WTC11 (cell line): ENCODE measurements at regions of chr12 and their contacts with region 1.

Region 1: GRCh38 chr12:8949342-8950220 is at the start of gene M6PR:
- DNase-seq: peak; percentile 91
- ATAC-seq: peak; percentile 89
- H3K4me3 Mint-ChIP-seq: peak within 1 kb of the TSS; percentile 95
- H3K27ac Mint-ChIP-seq: peak within 1 kb of the TSS; percentile 93
- H3K4me1 Mint-ChIP-seq: peaks cover 20% of the 10 kb centered on the region
- H3K27me3 Mint-ChIP-seq: no peaks in the 10 kb centered on the region
- CTCF ChIP-seq: no peak
- total RNA-seq, gene M6PR: 106 to 139 TPM (median 112 TPM) in 3 replicates

Region 2: GRCh38 chr12:8914716-8915526 is 34.7 kb before region 1 on chr12:
- CTCF ChIA-PET with region 1: interaction called, 10 read pairs
- POLR2A ChIA-PET with region 1: interaction called, 16 read pairs
- DNase-seq: peak; percentile 73
- ATAC-seq: peak; percentile 60
- H3K4me3 Mint-ChIP-seq: no peak overlapping the region
- H3K27ac Mint-ChIP-seq: no peak overlapping the region
- H3K4me1 Mint-ChIP-seq: peaks cover 48% of the 10 kb centered on the region
- H3K27me3 Mint-ChIP-seq: no peaks in the 10 kb centered on the region
- CTCF ChIP-seq: no peak

Region 3: GRCh38 chr12:8996682-8997360 is 47.2 kb after region 1 on chr12:
- CTCF ChIA-PET with region 1: no interaction called
- POLR2A ChIA-PET with region 1: no interaction called
- DNase-seq: no peak
- ATAC-seq: no peak
- H3K4me3 Mint-ChIP-seq: no peak overlapping the region
- H3K27ac Mint-ChIP-seq: peak overlapping the region; percentile 62
- H3K4me1 Mint-ChIP-seq: peaks cover 9% of the 10 kb centered on the region
- H3K27me3 Mint-ChIP-seq: no peaks in the 10 kb centered on the region
- CTCF ChIP-seq: no peak

Region 4: GRCh38 chr12:9032202-9033178 is 82.9 kb after region 1 on chr12:
- CTCF ChIA-PET with region 1: interaction called, 36 read pairs
- POLR2A ChIA-PET with region 1: interaction called, 6 read pairs
- DNase-seq: no peak
- ATAC-seq: no peak
- H3K4me3 Mint-ChIP-seq: no peak overlapping the region
- H3K27ac Mint-ChIP-seq: no peak overlapping the region
- H3K4me1 Mint-ChIP-seq: peaks cover 7% of the 10 kb centered on the region
- H3K27me3 Mint-ChIP-seq: no peaks in the 10 kb centered on the region; the same call in 1 of the 2 replicates
- CTCF ChIP-seq: no peak

Region 5: DNA sequence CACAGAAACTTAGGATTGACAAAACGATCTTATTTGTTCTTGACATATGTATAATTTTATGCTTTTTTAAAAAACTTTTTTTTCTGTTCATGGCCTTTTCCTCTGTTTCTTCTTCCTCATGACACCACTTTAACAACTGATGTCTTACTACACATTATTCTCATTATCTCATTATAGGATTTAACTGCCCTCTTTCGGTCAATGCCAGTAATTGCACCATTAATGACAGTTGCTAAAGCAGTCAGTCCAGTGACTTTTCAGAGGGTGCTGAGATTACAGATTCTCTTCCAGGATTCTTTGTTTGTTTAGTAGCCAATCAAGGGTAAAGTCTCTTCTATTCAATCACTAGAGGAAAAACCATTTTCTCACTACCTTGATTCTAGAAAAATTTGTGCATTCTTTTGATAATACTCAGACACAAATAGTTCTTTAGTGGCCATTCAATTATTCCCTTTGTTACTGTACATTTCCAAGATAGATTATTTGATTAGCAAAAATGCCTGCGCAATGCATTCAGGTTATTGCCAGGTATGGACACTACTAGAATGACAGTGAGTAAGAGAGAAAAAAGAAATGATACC is 89.9 kb after region 1 on chr12:
- CTCF ChIA-PET with region 1: interaction called, 36 read pairs
- POLR2A ChIA-PET with region 1: no interaction called
- DNase-seq: no peak
- ATAC-seq: peak; percentile 65
- H3K4me3 Mint-ChIP-seq: no peak overlapping the region
- H3K27ac Mint-ChIP-seq: no peak overlapping the region
- H3K4me1 Mint-ChIP-seq: no peaks in the 10 kb centered on the region
- H3K27me3 Mint-ChIP-seq: no peaks in the 10 kb centered on the region; the same call in 1 of the 2 replicates
- CTCF ChIP-seq: peak; percentile 68

Region 6: DNA sequence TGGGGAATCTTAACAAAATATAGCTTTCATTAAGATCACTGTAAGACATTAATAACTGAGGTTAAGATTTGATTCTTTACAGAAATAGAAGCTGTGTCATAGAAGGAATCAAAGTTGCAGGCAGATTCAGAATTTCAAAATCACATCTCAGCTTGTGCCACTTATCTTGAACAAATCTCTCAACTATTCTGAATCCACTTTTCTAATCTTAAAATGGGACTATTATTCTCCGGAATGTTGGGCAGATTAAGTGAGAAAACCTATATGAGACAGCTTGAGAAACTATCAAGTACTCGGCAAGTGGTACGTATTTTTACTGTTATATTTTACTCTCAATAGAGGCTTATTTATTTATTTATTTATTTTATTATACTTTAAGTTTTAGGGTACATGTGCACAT is 230.2 kb after region 1 on chr12:
- CTCF ChIA-PET with region 1: no interaction called
- POLR2A ChIA-PET with region 1: no interaction called
- DNase-seq: no peak
- ATAC-seq: no peak
- H3K4me3 Mint-ChIP-seq: no peak overlapping the region
- H3K27ac Mint-ChIP-seq: no peak overlapping the region
- H3K4me1 Mint-ChIP-seq: no peaks in the 10 kb centered on the region
- H3K27me3 Mint-ChIP-seq: no peaks in the 10 kb centered on the region; the same call in 1 of the 2 replicates
- CTCF ChIP-seq: no peak